ENCODE measurements at regions of chr20 and their contacts with region 1.

Region 1: DNA sequence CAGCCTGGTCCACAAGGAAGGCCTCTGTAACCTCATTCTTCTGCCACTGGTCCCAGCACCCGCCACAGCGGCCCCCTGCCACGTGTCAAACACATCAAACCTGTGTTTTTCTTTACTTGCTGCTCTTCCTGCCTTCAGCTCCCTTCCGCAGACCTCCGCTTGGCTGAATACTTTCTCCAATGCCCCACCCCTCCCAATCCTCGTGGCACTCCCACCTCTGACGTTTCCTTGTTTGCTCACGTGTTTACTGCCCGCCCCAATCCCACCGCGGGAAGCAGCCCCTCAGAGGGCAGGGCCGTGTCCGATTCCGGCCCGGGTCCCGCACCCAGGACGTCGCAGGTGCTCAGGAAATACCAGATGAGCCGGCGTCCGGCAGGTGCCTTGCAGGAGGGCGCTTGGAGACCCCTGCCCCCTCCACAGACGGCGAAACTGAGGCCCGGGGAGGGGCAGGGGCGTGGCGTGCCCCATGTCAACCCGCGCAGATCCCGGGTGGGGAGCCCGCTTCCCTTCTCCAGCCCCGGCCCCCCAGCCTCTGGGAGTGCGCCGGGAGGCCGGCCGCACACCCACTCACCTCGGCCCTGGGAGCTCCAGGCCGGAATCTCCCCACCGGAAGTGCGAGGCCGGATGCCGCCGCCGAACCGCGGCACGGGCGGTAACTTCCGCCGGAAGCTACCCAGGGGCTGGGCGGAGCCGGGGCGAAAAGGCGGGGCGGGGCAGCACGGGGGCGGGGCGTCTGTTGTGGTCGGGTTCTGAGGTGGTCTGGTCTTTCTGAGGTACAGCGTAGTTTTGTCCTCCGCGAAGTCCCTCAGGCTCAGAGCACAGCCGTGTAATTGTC is 42.4 kb downstream of the ELMO2 start:
- DNase-seq: peak; percentile 95

Region 2: GRCh38 chr20:45685896-45686295 is 678.1 kb before region 1 on chr20:
- CTCF ChIA-PET with region 1: no interaction called
- POLR2A ChIA-PET with region 1: no interaction called
- DNase-seq: peak; percentile 39

Region 3: DNA sequence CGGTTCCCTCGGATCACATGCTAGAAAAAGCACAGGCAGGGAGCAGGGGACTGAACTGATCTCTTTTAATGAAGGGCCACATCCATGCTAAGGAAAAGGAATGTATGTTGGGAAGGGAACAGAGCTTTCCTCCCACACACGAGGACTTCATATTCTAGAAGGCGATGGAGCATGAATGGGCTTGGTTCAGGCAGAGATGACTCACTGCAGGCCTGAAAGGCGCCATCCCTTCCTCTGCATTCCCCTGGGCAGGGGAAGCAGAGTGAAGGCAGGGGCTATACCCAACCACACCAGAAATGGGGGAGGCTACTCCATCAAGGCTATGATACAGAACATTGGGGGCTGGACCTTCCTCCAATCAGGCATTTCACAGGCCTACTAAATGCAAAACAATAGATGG is 11.8 kb after region 1 on chr20:
- CTCF ChIA-PET with region 1: interaction called, 4 read pairs
- POLR2A ChIA-PET with region 1: interaction called, 27 read pairs
- DNase-seq: no peak

Region 4: DNA sequence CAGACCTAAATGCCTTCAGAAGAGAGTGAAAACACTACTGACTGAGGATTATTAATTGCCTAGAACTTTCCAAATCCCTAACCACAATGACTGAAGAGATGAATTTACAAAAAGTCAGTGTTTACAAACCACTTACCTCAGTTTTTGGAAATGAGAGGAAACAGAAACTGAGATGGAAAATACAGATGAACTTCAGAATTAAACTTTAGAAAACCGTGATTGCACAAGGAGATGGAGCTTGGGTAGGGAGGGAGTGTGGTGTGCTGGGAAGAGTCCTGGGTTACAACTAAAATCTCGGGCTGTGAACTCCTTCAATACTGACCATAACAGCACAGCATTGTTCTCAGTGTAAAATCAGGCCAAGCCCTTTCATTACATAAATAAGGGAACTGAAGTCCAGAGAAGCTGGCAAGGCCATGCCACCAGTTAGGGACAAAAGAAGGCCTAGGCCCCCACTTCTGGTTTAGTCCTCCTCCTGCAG is 38.4 kb after region 1 on chr20:
- CTCF ChIA-PET with region 1: no interaction called
- POLR2A ChIA-PET with region 1: interaction called, 12 read pairs
- DNase-seq: no peak

Measured in HEK293T (cell line).